Mammary epithelial cell (primary cell): ENCODE measurements at regions of chrX and their contacts with region 1.

Region 1: DNA sequence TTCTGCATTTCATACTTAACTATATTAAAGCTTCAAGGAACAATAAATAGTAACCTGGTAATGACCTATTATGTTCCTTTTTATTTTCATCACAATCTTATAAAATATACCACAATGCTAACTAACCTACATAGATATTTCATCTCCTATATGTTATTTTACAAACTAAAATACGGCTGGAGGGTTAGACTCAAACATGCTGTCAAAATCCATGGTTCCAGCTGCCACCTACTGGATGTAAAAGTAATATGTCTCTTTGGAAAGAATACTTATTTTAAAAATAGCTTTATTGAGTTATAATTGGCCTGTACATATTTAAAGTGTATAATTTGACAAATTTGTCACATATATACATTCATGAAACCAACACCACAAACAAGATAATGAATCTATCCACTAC is 15.0 kb downstream of the RGN start:
- DNase-seq: peak; percentile 12
- H3K4me3 ChIP-seq: no peak overlapping the region
- H3K27ac ChIP-seq: no peak overlapping the region
- H3K4me1 ChIP-seq: no peaks in the 10 kb centered on the region
- H3K27me3 ChIP-seq: no peaks in the 10 kb centered on the region
- CTCF ChIP-seq: peak; percentile 38 to 53

Region 2: DNA sequence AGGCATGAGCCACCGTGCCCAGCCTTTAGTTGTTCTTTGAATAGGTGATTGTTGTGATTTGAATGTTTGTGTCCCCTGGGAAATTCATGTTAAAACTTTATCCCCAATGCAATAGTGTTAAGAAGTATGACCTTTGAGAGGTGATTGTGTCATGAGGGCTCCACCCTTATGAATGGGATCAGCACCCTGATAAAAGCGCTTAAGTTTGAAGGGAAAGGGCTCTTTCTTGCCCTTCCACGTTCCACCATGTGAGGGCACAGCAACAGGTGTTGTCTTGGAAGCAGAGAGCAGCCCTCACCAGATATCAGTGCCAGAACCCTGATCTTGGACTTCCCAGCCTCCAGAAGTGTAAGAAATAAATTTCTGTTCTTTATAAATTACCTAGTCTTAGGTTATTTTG is 290.1 kb before region 1 on chrX:
- CTCF ChIA-PET with region 1: no interaction called
- dilution Hi-C with region 1: no loop called
- in situ Hi-C with region 1: no loop called
- intact Hi-C with region 1: loop called (anchors 2 kb)
- DNase-seq: no peak
- H3K4me3 ChIP-seq: no peak overlapping the region
- H3K27ac ChIP-seq: no peak overlapping the region
- H3K4me1 ChIP-seq: no peaks in the 10 kb centered on the region
- H3K27me3 ChIP-seq: no peaks in the 10 kb centered on the region
- CTCF ChIP-seq: peak; percentile 13 to 44

Region 3: GRCh38 chrX:47047989-47048388 is 45.3 kb before region 1 on chrX:
- CTCF ChIA-PET with region 1: no interaction called
- dilution Hi-C with region 1: no loop called
- in situ Hi-C with region 1: no loop called
- intact Hi-C with region 1: no loop called
- DNase-seq: no peak
- H3K4me3 ChIP-seq: no peak overlapping the region
- H3K27ac ChIP-seq: no peak overlapping the region
- H3K4me1 ChIP-seq: no peaks in the 10 kb centered on the region
- H3K27me3 ChIP-seq: no peaks in the 10 kb centered on the region
- CTCF ChIP-seq: no peak

Region 4: DNA sequence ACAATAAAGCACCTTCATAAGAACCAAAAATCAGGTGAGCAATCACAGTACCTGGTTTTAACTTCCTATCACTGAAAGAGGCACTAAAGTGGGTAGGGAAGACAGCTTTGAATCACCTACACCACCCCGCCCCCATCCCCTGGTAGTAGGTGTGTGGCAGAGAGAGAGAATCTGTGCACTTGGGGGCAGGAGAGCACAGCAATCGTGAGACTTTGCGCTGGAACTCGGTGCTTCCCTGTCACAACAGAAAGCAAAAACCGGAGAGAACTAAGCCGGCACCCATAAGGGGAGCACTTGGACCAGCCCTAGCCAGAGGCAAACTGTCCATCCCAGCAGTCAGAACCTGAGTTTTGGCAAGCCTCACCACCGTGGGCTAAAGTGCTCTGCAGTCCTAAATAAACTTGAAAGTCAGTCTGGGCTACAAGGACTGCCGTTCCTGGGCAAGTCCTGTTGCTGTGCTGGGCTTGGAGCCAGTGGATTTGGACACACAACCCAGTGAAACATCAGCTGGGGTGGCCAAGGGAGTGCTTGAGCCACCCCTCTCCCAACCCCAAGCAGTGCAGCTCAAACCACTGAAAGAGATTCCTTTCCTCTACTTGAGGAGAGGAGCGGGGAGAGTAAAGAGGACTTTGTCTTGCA is 19.2 kb after region 1 on chrX:
- CTCF ChIA-PET with region 1: interaction called, 17 read pairs
- dilution Hi-C with region 1: no loop called
- in situ Hi-C with region 1: no loop called
- intact Hi-C with region 1: no loop called
- DNase-seq: peak; percentile 55
- H3K4me3 ChIP-seq: no peak overlapping the region
- H3K27ac ChIP-seq: no peak overlapping the region
- H3K4me1 ChIP-seq: no peaks in the 10 kb centered on the region
- H3K27me3 ChIP-seq: no peaks in the 10 kb centered on the region
- CTCF ChIP-seq: peak in 1 of 2 donors; percentile 34

Region 5: DNA sequence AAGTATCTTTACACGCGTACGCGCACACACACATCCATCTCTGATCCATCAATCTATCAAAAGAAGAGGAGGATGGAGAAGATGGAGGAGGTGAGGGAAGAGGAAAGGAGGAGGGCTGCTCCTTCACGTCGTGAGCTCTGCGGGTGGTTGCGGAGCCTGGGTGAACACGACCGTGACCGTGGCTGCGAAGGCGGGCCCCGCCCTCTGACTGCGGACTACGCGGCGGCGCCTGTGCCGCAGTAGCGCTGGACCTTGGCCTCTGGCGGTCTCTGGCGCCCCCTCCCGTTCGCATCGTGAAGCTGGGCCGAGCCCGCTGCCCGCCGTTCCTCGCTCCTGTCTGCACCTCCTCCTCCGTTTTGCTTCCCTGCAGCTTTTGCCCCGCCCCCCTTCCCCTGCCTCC is 430.0 kb after region 1 on chrX:
- CTCF ChIA-PET with region 1: no interaction called
- dilution Hi-C with region 1: no loop called
- in situ Hi-C with region 1: no loop called
- intact Hi-C with region 1: no loop called
- DNase-seq: peak; percentile 36
- H3K4me3 ChIP-seq: peak overlapping the region; percentile 24 to 53 (median 48)
- H3K27ac ChIP-seq: no peak overlapping the region
- H3K4me1 ChIP-seq: peaks cover 3% of the 10 kb centered on the region
- H3K27me3 ChIP-seq: no peaks in the 10 kb centered on the region
- CTCF ChIP-seq: peak; percentile 50 to 78